CD4-positive, alpha-beta memory T cell (primary cell): ENCODE measurements at regions of chr6 and their contacts with region 1.

Region 1: GRCh38 chr6:127464881-127465459 is 5.8 kb upstream of the KIAA0408 start:
- DNase-seq: peak; percentile 29 to 50 (median 45)
- H3K4me3 ChIP-seq: no peak overlapping the region
- H3K4me3 Mint-ChIP-seq: no peak overlapping the region
- H3K27ac ChIP-seq: no peak overlapping the region
- H3K27ac Mint-ChIP-seq: no peak overlapping the region
- H3K4me1 ChIP-seq: no peaks in the 10 kb centered on the region
- H3K4me1 Mint-ChIP-seq: peaks cover 0 to 2% (median 0%) of the 10 kb centered on the region in 4 donors
- H3K27me3 ChIP-seq: no peaks in the 10 kb centered on the region
- H3K27me3 Mint-ChIP-seq: no peaks in the 10 kb centered on the region

Region 2: DNA sequence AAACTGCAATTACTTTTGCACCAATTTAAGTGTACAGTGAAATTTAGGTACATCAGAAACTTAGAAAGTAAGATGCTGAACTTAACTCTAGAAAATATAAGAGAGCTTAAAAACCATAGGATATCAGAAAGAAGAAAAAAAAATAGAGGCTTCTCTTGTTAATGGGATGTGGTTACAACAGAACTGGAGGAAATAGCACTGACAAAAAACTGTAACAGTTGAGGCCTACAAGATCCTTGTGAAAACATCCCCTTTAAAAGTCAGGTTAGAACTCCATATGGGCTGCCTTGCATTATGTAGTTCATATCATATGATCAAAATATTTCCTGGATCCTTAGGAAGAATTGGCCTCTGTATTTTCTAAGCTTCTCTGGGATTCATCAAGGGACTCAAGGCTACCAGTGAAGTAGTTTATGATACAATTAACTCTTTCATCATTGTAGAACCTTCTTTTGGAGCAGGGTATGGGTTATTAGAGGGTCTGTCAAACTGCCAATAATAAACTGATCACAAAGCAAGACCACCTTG is 29.3 kb after region 1 on chr6:
- CTCF ChIA-PET with region 1: no interaction called
- POLR2A ChIA-PET with region 1: no interaction called
- intact Hi-C with region 1: no loop called
- DNase-seq: no peak
- H3K4me3 ChIP-seq: no peak overlapping the region
- H3K4me3 Mint-ChIP-seq: no peak overlapping the region
- H3K27ac ChIP-seq: no peak overlapping the region
- H3K27ac Mint-ChIP-seq: no peak overlapping the region
- H3K4me1 ChIP-seq: peaks cover 4% of the 10 kb centered on the region
- H3K4me1 Mint-ChIP-seq: peaks cover 0 to 10% (median 5%) of the 10 kb centered on the region in 4 donors
- H3K27me3 ChIP-seq: no peaks in the 10 kb centered on the region
- H3K27me3 Mint-ChIP-seq: no peaks in the 10 kb centered on the region

Region 3: GRCh38 chr6:127516666-127517273 is 51.8 kb after region 1 on chr6:
- CTCF ChIA-PET with region 1: interaction called, 44 read pairs
- POLR2A ChIA-PET with region 1: interaction called, 3 read pairs
- intact Hi-C with region 1: loop called (anchors 1 kb)
- DNase-seq: peak in 4 of 5 donors; percentile 51 to 60 (median 53)
- H3K4me3 ChIP-seq: peak overlapping the region; percentile 54 to 61
- H3K4me3 Mint-ChIP-seq: peak overlapping the region; percentile 83 to 96 (median 92)
- H3K27ac ChIP-seq: peak overlapping the region; percentile 50
- H3K27ac Mint-ChIP-seq: peak overlapping the region; percentile 43 to 93 (median 88)
- H3K4me1 ChIP-seq: peaks cover 40% of the 10 kb centered on the region
- H3K4me1 Mint-ChIP-seq: peaks cover 26 to 51% (median 38%) of the 10 kb centered on the region in 4 donors
- H3K27me3 ChIP-seq: peaks cover 16% of the 10 kb centered on the region
- H3K27me3 Mint-ChIP-seq: peaks cover 14 to 21% of the 10 kb centered on the region in 2 donors

Region 4: DNA sequence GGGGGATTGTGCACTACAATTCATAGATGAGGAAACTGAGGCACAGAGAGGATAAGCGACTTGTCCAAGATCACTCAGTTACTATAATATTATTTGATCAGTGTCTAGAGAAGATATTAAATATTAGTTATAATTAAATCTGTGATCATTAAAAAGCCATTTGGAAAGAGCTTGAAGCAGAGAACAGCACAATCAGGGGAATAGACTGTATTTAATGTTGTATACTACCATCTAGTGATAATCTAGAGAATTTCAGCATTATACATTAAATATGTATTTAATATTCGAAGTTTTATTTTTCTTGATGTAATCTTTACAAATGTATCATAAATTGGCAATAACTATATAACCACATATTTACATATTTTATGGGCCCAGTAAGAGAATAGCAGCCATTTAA is 74.3 kb after region 1 on chr6:
- CTCF ChIA-PET with region 1: interaction called, 59 read pairs
- POLR2A ChIA-PET with region 1: no interaction called
- intact Hi-C with region 1: loop called (anchors 1 kb)
- DNase-seq: peak in 4 of 5 donors; percentile 15 to 36 (median 22)
- H3K4me3 ChIP-seq: no peak overlapping the region
- H3K4me3 Mint-ChIP-seq: no peak overlapping the region
- H3K27ac ChIP-seq: no peak overlapping the region
- H3K27ac Mint-ChIP-seq: no peak overlapping the region
- H3K4me1 ChIP-seq: no peaks in the 10 kb centered on the region
- H3K4me1 Mint-ChIP-seq: no peaks in the 10 kb centered on the region
- H3K27me3 ChIP-seq: no peaks in the 10 kb centered on the region
- H3K27me3 Mint-ChIP-seq: peaks cover 7 to 13% of the 10 kb centered on the region in 2 donors

Region 5: GRCh38 chr6:127641905-127642304 is 176.9 kb after region 1 on chr6:
- CTCF ChIA-PET with region 1: no interaction called
- POLR2A ChIA-PET with region 1: no interaction called
- intact Hi-C with region 1: loop called (anchors 10 kb)
- DNase-seq: no peak
- H3K4me3 ChIP-seq: no peak overlapping the region
- H3K4me3 Mint-ChIP-seq: no peak overlapping the region
- H3K27ac ChIP-seq: no peak overlapping the region
- H3K27ac Mint-ChIP-seq: no peak overlapping the region
- H3K4me1 ChIP-seq: no peaks in the 10 kb centered on the region
- H3K4me1 Mint-ChIP-seq: no peaks in the 10 kb centered on the region
- H3K27me3 ChIP-seq: no peaks in the 10 kb centered on the region
- H3K27me3 Mint-ChIP-seq: no peaks in the 10 kb centered on the region

Region 6: DNA sequence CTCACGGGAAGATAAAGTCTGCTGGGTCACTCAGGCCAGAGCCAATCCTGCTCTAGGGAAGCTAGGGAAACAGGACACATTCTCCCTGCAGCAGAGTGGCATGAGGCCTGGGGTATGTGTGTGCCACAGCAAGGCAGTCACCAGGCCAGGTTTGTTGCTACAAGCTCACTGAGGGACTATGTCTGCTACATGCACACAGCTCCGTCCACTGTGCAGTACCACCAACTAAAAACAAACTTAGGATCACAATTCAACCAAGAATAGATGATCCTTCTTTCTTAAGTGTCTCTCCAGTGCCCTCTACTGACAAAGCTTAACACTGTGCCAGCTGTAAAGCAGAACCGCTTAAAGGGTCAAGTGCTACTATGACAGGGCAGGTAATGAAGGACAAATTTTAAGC is 862.9 kb after region 1 on chr6:
- CTCF ChIA-PET with region 1: no interaction called
- POLR2A ChIA-PET with region 1: no interaction called
- intact Hi-C with region 1: loop called (anchors 2 kb)
- DNase-seq: peak; percentile 32 to 57 (median 50)
- H3K4me3 ChIP-seq: no peak overlapping the region
- H3K4me3 Mint-ChIP-seq: no peak overlapping the region
- H3K27ac ChIP-seq: no peak overlapping the region
- H3K27ac Mint-ChIP-seq: no peak overlapping the region
- H3K4me1 ChIP-seq: no peaks in the 10 kb centered on the region
- H3K4me1 Mint-ChIP-seq: peaks cover 0 to 2% (median 0%) of the 10 kb centered on the region in 4 donors
- H3K27me3 ChIP-seq: no peaks in the 10 kb centered on the region
- H3K27me3 Mint-ChIP-seq: no peaks in the 10 kb centered on the region

Region 7: DNA sequence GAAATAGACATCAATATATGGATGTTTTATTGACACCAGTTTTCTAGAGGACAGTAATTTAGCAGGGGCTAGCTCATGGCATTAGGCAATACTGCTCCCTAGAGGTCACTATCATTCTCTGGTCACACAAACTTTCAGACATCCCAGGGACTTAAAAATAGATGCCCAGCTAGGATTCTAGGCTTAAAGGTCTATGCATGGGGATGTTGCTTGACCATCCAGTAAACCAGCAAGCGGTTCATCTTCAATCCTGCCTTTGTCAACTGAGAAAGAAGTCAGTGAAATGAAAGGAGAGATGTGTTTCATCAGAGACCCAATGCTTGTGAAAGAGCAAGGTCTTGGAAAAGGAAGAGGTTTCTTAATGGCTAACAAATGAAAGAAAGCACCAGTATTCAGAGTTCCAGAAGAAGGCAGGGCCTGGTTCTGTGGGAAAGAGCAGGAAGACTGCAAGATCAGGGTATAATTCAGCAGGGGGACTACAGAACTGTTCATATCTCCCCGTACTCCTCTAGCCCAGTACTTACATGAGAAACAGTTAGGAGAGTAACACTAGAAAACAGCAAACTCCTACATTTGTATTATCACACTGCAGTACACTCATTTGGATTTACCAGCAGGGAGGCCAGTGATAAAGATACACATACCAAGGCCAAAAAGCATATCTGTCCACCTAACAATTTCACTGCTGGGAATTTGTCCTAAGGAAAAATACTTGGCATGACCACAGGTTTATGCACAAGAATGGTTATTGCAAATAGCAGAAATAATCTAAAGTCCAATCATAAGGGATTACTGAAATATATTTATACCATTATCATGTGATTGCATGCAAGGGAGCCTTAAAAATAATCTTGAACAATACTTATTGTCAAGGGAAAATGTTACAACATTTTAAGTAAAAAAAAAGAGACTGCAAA is 1266.5 kb after region 1 on chr6:
- CTCF ChIA-PET with region 1: no interaction called
- POLR2A ChIA-PET with region 1: no interaction called
- intact Hi-C with region 1: loop called (anchors 2 kb)
- DNase-seq: no peak
- H3K4me3 ChIP-seq: no peak overlapping the region
- H3K4me3 Mint-ChIP-seq: no peak overlapping the region
- H3K27ac ChIP-seq: no peak overlapping the region
- H3K27ac Mint-ChIP-seq: no peak overlapping the region
- H3K4me1 ChIP-seq: no peaks in the 10 kb centered on the region
- H3K4me1 Mint-ChIP-seq: no peaks in the 10 kb centered on the region
- H3K27me3 ChIP-seq: no peaks in the 10 kb centered on the region
- H3K27me3 Mint-ChIP-seq: peaks cover 8 to 9% of the 10 kb centered on the region in 2 donors

Region 8: DNA sequence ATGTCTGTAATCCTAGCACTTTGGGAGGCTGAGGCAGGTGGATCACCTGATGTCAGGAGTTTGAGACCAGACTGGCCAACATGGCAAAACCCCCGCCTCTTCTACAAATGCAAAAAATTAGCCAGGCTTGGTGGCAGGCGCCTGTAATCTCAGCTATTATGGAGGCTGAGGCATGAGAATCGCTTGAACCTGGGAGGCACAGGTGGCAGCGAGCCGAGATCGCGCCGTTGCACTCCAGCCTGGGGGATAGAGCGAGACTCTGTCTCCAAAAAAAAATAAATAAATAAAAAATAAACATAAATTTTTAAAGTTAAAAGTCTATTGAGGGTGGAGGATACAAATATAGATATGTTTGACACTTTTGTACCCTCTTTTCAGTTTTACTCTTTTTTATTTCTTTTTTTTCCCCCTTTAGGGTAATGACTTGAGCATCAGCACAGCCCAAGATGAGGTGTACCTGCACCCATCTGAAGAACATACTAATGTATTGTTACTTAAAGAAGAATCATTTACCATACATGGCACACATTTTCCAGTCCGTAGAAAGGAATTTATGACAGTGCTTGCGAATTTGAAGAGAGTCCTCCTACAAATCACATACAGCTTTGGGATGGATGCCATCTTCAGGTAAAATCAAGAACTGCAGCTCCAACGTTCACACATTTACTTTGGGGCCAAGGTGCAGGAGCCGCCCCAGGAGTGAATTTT is 1786.9 kb after region 1 on chr6:
- CTCF ChIA-PET with region 1: no interaction called
- POLR2A ChIA-PET with region 1: no interaction called
- intact Hi-C with region 1: loop called (anchors 5 kb)
- DNase-seq: peak; percentile 41 to 57 (median 46)
- H3K4me3 ChIP-seq: no peak overlapping the region
- H3K4me3 Mint-ChIP-seq: peak overlapping the region in 2 of 8 donors; percentile 10 to 25
- H3K27ac ChIP-seq: no peak overlapping the region
- H3K27ac Mint-ChIP-seq: no peak overlapping the region
- H3K4me1 ChIP-seq: peaks cover 5% of the 10 kb centered on the region
- H3K4me1 Mint-ChIP-seq: peaks cover 0 to 15% (median 9%) of the 10 kb centered on the region in 4 donors
- H3K27me3 ChIP-seq: no peaks in the 10 kb centered on the region
- H3K27me3 Mint-ChIP-seq: peaks cover 16 to 22% of the 10 kb centered on the region in 2 donors